ENCODE measurements at regions of chr12 and their contacts with region 1.

Region 1: GRCh38 chr12:8544295-8544694 is 3.6 kb upstream of the CLEC4E start:
- DNase-seq: no peak

Region 2: GRCh38 chr12:8609061-8609570 is 64.8 kb after region 1 on chr12:
- intact Hi-C with region 1: loop called (anchors 2 kb)
- DNase-seq: no peak